ENCODE measurements at regions of chr6 and their contacts with region 1.

Region 1: DNA sequence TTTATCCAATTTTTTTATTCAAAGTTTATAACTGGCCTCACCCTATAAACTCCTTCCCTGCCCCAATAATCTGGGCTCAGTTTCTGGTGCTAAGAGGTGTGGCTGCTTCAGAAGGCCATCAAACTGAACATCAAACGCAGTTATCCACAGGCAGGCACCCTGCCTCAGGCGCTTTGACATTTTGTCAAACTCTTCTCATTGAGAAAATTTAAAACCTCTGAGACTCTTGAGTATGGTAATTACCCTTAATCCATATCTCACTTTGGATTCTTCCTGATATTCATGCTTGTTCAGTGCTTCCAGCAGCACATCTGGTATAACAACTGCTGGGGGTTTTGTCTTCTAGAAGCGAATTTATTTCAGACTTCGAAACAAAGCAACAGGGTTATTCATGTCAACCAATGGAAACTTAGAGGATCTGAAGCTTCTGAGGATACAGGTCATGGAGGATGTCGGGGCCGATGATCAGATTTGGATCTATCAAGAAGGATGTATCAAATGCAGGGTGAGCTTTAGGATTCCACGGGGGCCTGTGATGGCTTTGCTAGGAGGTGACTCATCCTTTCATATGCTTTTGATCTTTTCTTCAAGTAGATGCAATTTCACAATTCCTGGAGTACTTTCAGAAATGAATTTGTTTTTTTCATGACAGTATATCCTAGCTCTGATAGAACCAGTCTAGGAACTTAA is 68.2 kb downstream of the RTN4IP1 start:
- DNase-seq: no peak
- ATAC-seq: no peak
- H3K4me3 Mint-ChIP-seq: no peak overlapping the region
- H3K27ac Mint-ChIP-seq: no peak overlapping the region
- H3K4me1 Mint-ChIP-seq: peaks cover 4% of the 10 kb centered on the region
- H3K27me3 Mint-ChIP-seq: no peaks in the 10 kb centered on the region

Region 2: DNA sequence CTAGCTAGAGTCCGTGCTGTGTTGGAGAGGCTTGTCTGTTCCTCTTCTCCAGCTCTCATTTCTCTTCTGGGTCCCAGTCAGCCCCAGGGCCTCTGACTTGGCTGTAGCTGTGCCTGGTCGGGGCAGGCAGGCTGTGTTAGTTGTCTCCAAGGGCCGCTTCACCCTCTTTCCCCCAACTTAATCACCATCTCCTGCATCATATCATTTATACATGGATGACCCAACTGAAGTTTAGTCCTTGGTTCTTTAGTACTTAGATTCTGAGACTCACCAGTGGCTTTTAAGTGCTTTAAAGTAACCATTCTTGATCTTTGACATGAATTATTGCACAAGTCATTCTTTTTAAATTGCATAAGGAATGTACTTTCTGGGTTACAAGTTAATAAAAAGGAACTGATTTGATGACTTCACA is 59.2 kb before region 1 on chr6:
- POLR2A ChIA-PET with region 1: no interaction called
- DNase-seq: no peak
- ATAC-seq: no peak
- H3K4me3 Mint-ChIP-seq: no peak overlapping the region
- H3K27ac Mint-ChIP-seq: no peak overlapping the region
- H3K4me1 Mint-ChIP-seq: no peaks in the 10 kb centered on the region
- H3K27me3 Mint-ChIP-seq: peaks cover 7% of the 10 kb centered on the region

Region 3: GRCh38 chr6:106512048-106512967 is 48.8 kb before region 1 on chr6:
- POLR2A ChIA-PET with region 1: interaction called, 15 read pairs
- DNase-seq: peak; percentile 87
- ATAC-seq: peak; percentile 63
- H3K4me3 Mint-ChIP-seq: peak overlapping the region; percentile 90
- H3K27ac Mint-ChIP-seq: peak overlapping the region; percentile 99
- H3K4me1 Mint-ChIP-seq: peaks cover 39% of the 10 kb centered on the region
- H3K27me3 Mint-ChIP-seq: peaks cover 8% of the 10 kb centered on the region

Region 4: GRCh38 chr6:106702451-106703110 is 141.4 kb after region 1 on chr6:
- POLR2A ChIA-PET with region 1: no interaction called
- DNase-seq: no peak
- ATAC-seq: no peak
- H3K4me3 Mint-ChIP-seq: no peak overlapping the region
- H3K27ac Mint-ChIP-seq: no peak overlapping the region
- H3K4me1 Mint-ChIP-seq: peaks cover 2% of the 10 kb centered on the region
- H3K27me3 Mint-ChIP-seq: peaks cover 25% of the 10 kb centered on the region